ENCODE measurements at regions of chr19 and their contacts with region 1.

Region 1: GRCh38 chr19:33186431-33187182 is 7.5 kb upstream of the LRP3 start:
- DNase-seq: no peak
- H3K4me3 ChIP-seq: no peak overlapping the region
- H3K27me3 ChIP-seq: no peaks in the 10 kb centered on the region; the same call in 1 of the 2 replicates
- CTCF ChIP-seq: no peak

Region 2: GRCh38 chr19:33125929-33126388 is 60.6 kb before region 1 on chr19:
- CTCF ChIA-PET with region 1: interaction called, 104 read pairs
- POLR2A ChIA-PET with region 1: no interaction called
- DNase-seq: no peak
- H3K4me3 ChIP-seq: no peak overlapping the region
- H3K27me3 ChIP-seq: no peaks in the 10 kb centered on the region
- CTCF ChIP-seq: peak; percentile 88

Region 3: DNA sequence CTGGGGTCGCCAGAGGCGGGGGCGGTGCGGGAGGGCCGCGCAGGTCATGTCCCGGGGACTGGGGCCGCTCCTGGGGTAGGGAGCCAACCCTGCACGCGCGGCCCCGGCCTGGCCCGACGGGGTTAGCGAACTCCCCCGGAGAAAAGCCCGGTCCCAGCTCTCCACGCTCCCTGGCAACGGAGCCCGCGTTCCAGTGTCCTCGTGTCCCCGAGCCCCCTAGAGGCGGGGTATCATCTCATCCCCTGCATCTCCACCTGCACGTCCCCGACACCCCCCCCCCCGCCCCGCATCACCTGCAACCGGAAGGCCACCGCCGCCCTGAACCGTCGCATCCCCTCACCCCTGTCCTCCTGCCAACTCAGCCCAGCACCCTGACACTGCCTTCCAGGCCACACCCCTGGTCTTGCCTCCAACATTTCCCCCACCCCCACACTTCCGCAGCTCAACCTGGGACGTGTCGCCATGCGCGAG is 52.0 kb before region 1 on chr19:
- CTCF ChIA-PET with region 1: interaction called, 36 read pairs
- POLR2A ChIA-PET with region 1: no interaction called
- DNase-seq: no peak
- H3K4me3 ChIP-seq: no peak overlapping the region
- H3K27me3 ChIP-seq: no peaks in the 10 kb centered on the region; the same call in 1 of the 2 replicates
- CTCF ChIP-seq: no peak

Region 4: GRCh38 chr19:33143897-33144405 is 42.7 kb before region 1 on chr19:
- CTCF ChIA-PET with region 1: interaction called, 84 read pairs
- POLR2A ChIA-PET with region 1: no interaction called
- DNase-seq: no peak
- H3K4me3 ChIP-seq: no peak overlapping the region
- H3K27me3 ChIP-seq: no peaks in the 10 kb centered on the region
- CTCF ChIP-seq: peak; percentile 95

Region 5: DNA sequence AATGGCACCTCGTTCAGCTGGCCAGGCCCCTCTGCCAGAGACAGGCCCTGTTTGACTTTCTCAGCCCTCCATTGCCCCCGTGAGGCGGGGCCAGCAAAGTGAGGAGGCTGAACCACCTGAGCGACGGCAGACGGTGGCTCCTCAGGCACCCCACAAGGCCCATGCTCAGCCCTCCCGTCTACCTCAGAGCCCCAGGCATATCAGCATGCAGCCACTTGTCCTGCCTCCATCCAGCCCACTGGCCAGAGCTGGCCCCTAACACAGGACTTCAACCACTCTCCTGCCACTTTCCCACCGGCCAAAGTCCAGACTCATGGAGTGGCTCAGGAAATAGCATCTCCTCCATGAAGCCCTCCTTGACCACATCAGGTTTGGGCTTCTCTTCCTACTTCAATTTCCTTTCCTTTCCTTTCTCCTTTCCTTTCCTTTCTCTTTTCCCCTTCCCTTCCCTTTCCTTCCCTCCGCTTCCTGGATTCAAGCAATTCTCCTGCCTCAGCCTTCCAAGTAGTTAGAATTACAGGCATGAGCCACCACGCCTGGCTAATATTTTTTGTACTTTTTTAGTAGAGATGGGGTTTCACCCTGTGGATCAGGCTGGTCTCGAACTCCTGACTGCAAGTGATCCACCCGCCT is 29.7 kb after region 1 on chr19:
- CTCF ChIA-PET with region 1: no interaction called
- POLR2A ChIA-PET with region 1: no interaction called
- DNase-seq: no peak
- H3K4me3 ChIP-seq: no peak overlapping the region
- H3K27me3 ChIP-seq: no peaks in the 10 kb centered on the region; the same call in 1 of the 2 replicates
- CTCF ChIP-seq: no peak